Dendritic cell treated with granulocyte-macrophage colony-stimulating factor and Interleukin-4, amounts not matched to agents 40 ng/mL and 50 ng/mL, for 4 days (primary cell): ENCODE measurements at regions of chr5 and their contacts with region 1.

Region 1: DNA sequence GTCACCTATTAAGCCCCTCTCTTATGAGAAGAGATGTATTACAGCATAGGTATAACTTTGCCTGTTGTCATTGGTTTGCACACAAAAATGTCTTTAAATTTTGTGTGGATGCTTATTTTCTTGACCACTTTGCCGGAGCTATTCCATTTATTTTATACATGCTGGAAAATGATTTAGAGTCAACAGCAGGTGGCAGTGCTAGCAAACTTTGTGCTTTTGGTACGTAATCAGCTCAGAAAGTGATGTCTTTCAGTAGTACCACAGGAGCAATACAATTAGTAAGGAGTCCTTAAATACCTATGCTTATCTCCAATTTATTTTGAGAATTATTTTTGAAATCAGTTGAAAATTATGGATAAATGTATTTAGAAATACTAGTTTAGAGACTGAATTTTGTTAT is 19.8 kb upstream of the NUDT12 start:
- H3K4me3 Mint-ChIP-seq: no peak overlapping the region
- H3K27ac Mint-ChIP-seq: no peak overlapping the region
- H3K4me1 Mint-ChIP-seq: no peaks in the 10 kb centered on the region
- H3K27me3 Mint-ChIP-seq: no peaks in the 10 kb centered on the region

Region 2: DNA sequence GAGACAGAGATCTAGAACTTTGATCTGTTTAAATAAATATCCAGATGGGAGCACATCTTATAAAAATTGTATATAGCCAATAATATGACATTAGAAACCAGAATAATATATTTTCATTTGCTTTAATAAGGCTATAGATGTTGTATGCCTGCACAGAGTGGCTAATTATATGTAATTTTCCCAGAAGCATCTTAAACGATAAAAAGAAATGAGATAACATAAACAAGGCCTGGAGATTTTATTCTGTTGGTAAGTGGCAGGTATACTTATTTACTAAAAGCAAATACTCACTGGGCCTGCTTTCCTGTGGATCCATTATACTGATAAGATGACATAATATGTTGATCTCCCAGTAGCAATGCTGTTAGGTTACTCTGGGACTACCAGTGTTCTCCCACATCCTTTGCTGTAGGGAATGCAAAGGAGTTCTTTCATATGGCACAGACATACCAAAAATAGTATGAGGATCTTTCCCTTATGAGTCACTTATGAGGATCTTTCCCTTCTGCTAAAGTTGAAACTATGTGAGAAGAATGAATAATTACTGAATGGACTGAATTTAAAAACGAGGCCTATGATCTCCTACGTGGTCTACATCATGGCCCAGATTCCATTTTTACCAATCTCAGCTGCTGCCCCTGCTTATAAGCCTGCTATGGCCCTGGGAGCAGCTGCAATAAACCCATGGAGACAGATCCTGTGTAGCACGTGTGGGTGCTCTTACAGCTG is 131.9 kb before region 1 on chr5:
- intact Hi-C with region 1: no loop called
- H3K4me3 Mint-ChIP-seq: no peak overlapping the region
- H3K27ac Mint-ChIP-seq: no peak overlapping the region
- H3K4me1 Mint-ChIP-seq: no peaks in the 10 kb centered on the region
- H3K27me3 Mint-ChIP-seq: no peaks in the 10 kb centered on the region

Region 3: DNA sequence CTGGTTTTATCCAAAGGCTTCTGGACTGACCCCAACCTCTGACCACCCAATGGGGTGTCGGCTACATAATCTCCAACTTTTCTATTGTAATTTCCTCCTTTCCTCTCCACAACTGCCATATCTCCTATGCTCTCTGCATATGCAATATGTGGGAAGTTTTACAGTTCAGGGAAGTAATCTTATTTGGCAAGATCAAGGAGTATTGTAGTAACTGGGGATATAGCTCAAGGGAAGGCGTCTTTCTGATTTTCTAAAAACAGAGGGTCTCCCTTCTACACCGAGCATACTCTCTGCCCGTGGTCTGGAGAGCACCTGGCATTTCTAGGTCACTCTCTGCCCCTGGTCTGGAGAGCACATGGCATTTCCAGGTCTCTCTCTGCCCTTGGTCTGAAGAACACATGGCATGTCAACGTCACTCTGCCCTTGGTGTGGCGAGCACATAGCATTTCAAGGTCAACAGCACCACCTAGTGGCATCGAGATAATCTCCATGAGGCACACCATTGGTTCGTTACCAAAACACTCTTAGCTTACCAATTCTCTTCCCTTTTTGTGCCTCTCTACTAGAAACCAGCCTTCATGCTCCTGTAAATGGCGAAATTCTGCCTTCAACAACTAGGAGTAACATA is 596.6 kb after region 1 on chr5:
- intact Hi-C with region 1: loop called (anchors 10 kb)
- H3K4me3 Mint-ChIP-seq: no peak overlapping the region
- H3K27ac Mint-ChIP-seq: no peak overlapping the region
- H3K4me1 Mint-ChIP-seq: no peaks in the 10 kb centered on the region
- H3K27me3 Mint-ChIP-seq: no peaks in the 10 kb centered on the region

Region 4: DNA sequence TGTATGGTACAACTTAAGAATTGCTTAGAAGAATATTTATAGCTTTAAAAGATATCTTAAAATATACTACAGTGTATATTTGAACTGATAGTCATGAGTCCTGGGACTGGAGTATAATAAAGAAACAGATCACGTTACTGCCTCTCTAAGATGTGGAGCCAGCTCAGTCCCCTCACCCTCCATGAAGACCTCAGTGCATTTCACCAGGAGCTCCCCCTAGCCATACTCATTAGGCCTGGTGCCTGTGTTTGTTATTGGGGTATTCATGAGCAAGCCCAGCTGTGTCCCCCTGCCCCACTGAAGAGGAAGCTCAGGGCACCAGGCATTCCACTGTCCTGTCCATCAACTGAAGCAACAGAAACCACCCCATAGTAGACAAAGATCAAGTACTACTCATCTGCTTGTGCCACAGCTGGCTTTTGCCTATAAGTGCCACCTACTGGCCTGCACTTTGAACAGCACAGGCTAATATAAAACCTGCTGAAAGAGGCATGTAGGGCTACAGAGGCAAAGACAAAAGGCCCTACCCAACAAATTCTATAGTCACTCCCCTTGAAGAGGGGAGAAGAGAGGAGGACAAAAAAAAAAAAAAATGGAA is 830.4 kb after region 1 on chr5:
- intact Hi-C with region 1: loop called (anchors 10 kb)
- H3K4me3 Mint-ChIP-seq: no peak overlapping the region
- H3K27ac Mint-ChIP-seq: no peak overlapping the region
- H3K4me1 Mint-ChIP-seq: no peaks in the 10 kb centered on the region
- H3K27me3 Mint-ChIP-seq: no peaks in the 10 kb centered on the region